Activated CD4-positive, alpha-beta T cell treated with anti-CD3 and anti-CD28 coated beads, Interleukin-2, amount 10 ng/mL, durations not matched to agents 24 days and 14 days (primary cell): ENCODE measurements at regions of chr3 and their contacts with region 1.

Region 1: GRCh38 chr3:56894881-56895431 is 93.2 kb upstream of the ARHGEF3 start:
- DNase-seq: peak; percentile 70
- H3K4me3 Mint-ChIP-seq: no peak overlapping the region
- H3K27ac Mint-ChIP-seq: peak overlapping the region; percentile 45
- H3K4me1 Mint-ChIP-seq: peaks cover 43% of the 10 kb centered on the region
- H3K27me3 Mint-ChIP-seq: no peaks in the 10 kb centered on the region

Region 2: GRCh38 chr3:56930706-56931105 is 35.8 kb after region 1 on chr3:
- intact Hi-C with region 1: loop called (anchors 5 kb)
- DNase-seq: peak; percentile 61
- H3K4me3 Mint-ChIP-seq: no peak overlapping the region
- H3K27ac Mint-ChIP-seq: peak overlapping the region; percentile 62
- H3K4me1 Mint-ChIP-seq: peaks cover 38% of the 10 kb centered on the region
- H3K27me3 Mint-ChIP-seq: no peaks in the 10 kb centered on the region